Activated B cell treated with CpG ODN at 0.5 μM for 24 hours (primary cell): ENCODE measurements at regions of chr17 and their contacts with region 1.

Region 1: GRCh38 chr17:64648234-64648633 is 13.9 kb downstream of the SMURF2 start:
- DNase-seq: no peak
- ATAC-seq: no peak
- H3K4me3 Mint-ChIP-seq: no peak overlapping the region
- H3K27ac Mint-ChIP-seq: no peak overlapping the region
- H3K4me1 Mint-ChIP-seq: peaks cover 10% of the 10 kb centered on the region
- H3K27me3 Mint-ChIP-seq: no peaks in the 10 kb centered on the region
- CTCF ChIP-seq: no peak

Region 2: DNA sequence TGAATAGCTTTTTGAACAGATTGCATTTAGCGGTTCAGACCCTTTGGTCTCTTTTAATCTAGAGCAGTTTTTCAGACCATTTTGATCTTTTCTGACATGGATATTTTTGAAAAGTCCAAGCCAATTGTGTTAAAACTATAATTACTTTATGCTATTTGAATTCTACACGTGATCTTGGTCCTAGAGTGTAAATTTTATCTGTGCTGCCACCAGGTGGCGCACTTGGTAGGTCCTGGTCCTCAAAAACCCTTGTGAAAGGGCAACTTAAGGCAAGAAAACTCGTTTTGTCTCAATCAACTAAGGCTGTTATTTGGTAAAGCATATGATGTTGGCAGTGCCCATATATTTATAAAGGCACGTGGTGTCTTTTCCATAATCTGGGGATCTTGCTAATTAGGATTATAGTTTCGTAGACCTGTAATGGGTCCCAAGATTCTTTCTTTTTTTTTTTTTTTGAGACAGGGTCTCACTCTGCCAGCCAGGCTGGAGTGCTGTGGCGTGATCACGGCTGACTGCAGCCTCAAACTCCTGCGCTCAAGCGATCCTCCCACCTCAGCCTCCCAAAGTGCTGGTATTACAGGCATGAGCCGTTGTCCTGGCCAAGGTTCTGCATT is 341.3 kb before region 1 on chr17:
- CTCF ChIA-PET with region 1: no interaction called
- POLR2A ChIA-PET with region 1: no interaction called
- intact Hi-C with region 1: loop called (anchors 2 kb)
- DNase-seq: peak; percentile 50
- ATAC-seq: peak; percentile 58
- H3K4me3 Mint-ChIP-seq: no peak overlapping the region
- H3K27ac Mint-ChIP-seq: no peak overlapping the region
- H3K4me1 Mint-ChIP-seq: no peaks in the 10 kb centered on the region
- H3K27me3 Mint-ChIP-seq: no peaks in the 10 kb centered on the region
- CTCF ChIP-seq: peak; percentile 76

Region 3: GRCh38 chr17:64320613-64321553 is 327.4 kb before region 1 on chr17:
- CTCF ChIA-PET with region 1: no interaction called
- POLR2A ChIA-PET with region 1: no interaction called
- intact Hi-C with region 1: loop called (anchors 5 kb)
- DNase-seq: peak; percentile 21
- ATAC-seq: no peak
- H3K4me3 Mint-ChIP-seq: peak overlapping the region; percentile 55
- H3K27ac Mint-ChIP-seq: no peak overlapping the region
- H3K4me1 Mint-ChIP-seq: peaks cover 43% of the 10 kb centered on the region
- H3K27me3 Mint-ChIP-seq: peaks cover 2% of the 10 kb centered on the region
- CTCF ChIP-seq: no peak

Region 4: DNA sequence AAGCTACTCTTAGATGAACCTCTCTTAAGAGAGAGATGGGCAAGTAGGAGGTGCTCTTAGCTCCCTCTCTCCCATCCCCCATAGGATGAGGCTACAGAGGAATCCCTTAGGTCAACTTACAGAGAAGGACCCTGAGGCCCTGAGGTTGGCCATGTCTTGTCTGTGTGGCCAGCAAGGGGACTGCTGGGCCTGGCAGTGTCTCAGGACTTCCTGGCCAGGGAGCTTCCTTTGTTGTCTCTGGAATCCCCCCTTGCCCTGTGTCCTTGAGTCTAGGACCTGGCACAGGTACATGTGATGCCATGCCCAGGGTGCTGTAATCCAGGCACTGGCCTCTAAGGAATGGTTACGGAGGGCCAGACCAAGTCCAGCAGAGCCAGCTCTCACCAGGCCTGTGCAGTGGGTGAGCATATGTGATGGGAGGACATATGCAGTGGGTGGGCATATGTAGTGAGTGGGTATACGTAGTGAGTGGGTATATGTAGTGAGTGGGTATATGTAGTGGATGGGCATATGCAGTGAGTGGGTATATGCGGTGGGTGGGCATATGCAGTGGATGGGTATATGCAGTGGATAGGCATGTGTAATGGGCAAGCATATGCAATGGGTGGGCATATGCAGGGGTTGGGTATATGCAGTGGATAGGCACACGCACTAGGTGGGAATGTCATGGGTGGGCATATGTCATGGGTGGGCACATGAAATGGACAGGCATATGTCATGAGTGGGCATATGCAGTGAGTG is 237.3 kb before region 1 on chr17:
- CTCF ChIA-PET with region 1: no interaction called
- POLR2A ChIA-PET with region 1: no interaction called
- intact Hi-C with region 1: no loop called
- DNase-seq: no peak
- ATAC-seq: no peak
- H3K4me3 Mint-ChIP-seq: peak overlapping the region; percentile 24
- H3K27ac Mint-ChIP-seq: peak overlapping the region; percentile 71
- H3K4me1 Mint-ChIP-seq: peaks cover 67% of the 10 kb centered on the region
- H3K27me3 Mint-ChIP-seq: no peaks in the 10 kb centered on the region
- CTCF ChIP-seq: no peak

Region 5: GRCh38 chr17:64496786-64497564 is 151.3 kb before region 1 on chr17 and contains the start of gene POLG2:
- CTCF ChIA-PET with region 1: no interaction called
- POLR2A ChIA-PET with region 1: no interaction called
- intact Hi-C with region 1: loop called (anchors 2 kb)
- DNase-seq: peak; percentile 93
- ATAC-seq: peak; percentile 85
- H3K4me3 Mint-ChIP-seq: peak within 1 kb of the TSS; percentile 100
- H3K27ac Mint-ChIP-seq: peak within 1 kb of the TSS; percentile 99
- H3K4me1 Mint-ChIP-seq: peaks cover 75% of the 10 kb centered on the region
- H3K27me3 Mint-ChIP-seq: no peaks in the 10 kb centered on the region
- CTCF ChIP-seq: no peak
- total RNA-seq, gene POLG2: 50.3 and 63.9 TPM in 2 replicates

Region 6: GRCh38 chr17:64534175-64534574 is 114.1 kb before region 1 on chr17:
- CTCF ChIA-PET with region 1: interaction called, 4 read pairs
- POLR2A ChIA-PET with region 1: no interaction called
- intact Hi-C with region 1: loop called (anchors 5 kb)
- DNase-seq: no peak
- ATAC-seq: peak; percentile 34
- H3K4me3 Mint-ChIP-seq: no peak overlapping the region
- H3K27ac Mint-ChIP-seq: no peak overlapping the region
- H3K4me1 Mint-ChIP-seq: no peaks in the 10 kb centered on the region
- H3K27me3 Mint-ChIP-seq: no peaks in the 10 kb centered on the region
- CTCF ChIP-seq: no peak

Region 7: GRCh38 chr17:64599187-64599676 is 49.0 kb before region 1 on chr17:
- CTCF ChIA-PET with region 1: interaction called, 6 read pairs
- POLR2A ChIA-PET with region 1: no interaction called
- intact Hi-C with region 1: loop called (anchors 5 kb)
- DNase-seq: peak; percentile 36
- ATAC-seq: peak; percentile 100
- H3K4me3 Mint-ChIP-seq: peak overlapping the region; percentile 47
- H3K27ac Mint-ChIP-seq: peak overlapping the region; percentile 71
- H3K4me1 Mint-ChIP-seq: peaks cover 32% of the 10 kb centered on the region
- H3K27me3 Mint-ChIP-seq: no peaks in the 10 kb centered on the region
- CTCF ChIP-seq: no peak